Transverse colon (tissue), 4 donors: ENCODE measurements at regions of chr12 and their contacts with region 1.

Region 1: GRCh38 chr12:76920172-76921014 is 41.6 kb upstream of the CSRP2 start:
- DNase-seq: no peak
- H3K4me3 ChIP-seq: no peak overlapping the region
- H3K27ac ChIP-seq: no peak overlapping the region
- H3K4me1 ChIP-seq: no peaks in the 10 kb centered on the region
- H3K27me3 ChIP-seq: no peaks in the 10 kb centered on the region
- CTCF ChIP-seq: no peak
- EP300 ChIP-seq: no peak
- POLR2A ChIP-seq: no peak

Region 2: GRCh38 chr12:76820888-76821482 is 99.4 kb before region 1 on chr12:
- in situ Hi-C with region 1: loop called in 1 of 4 experiments (anchors 25 kb)
- intact Hi-C with region 1: no loop called
- DNase-seq: peak; percentile 19
- H3K4me3 ChIP-seq: no peak overlapping the region
- H3K27ac ChIP-seq: no peak overlapping the region
- H3K4me1 ChIP-seq: no peaks in the 10 kb centered on the region
- H3K27me3 ChIP-seq: no peaks in the 10 kb centered on the region
- CTCF ChIP-seq: peak; percentile 41 to 55 (median 47)
- EP300 ChIP-seq: no peak
- POLR2A ChIP-seq: no peak

Region 3: GRCh38 chr12:76859611-76860010 is 60.8 kb before region 1 on chr12:
- in situ Hi-C with region 1: no loop called
- intact Hi-C with region 1: no loop called
- DNase-seq: no peak
- H3K4me3 ChIP-seq: no peak overlapping the region
- H3K27ac ChIP-seq: peak overlapping the region in 2 of 4 donors; percentile 29 to 41
- H3K4me1 ChIP-seq: peaks cover 0 to 12% (median 0%) of the 10 kb centered on the region in 4 donors
- H3K27me3 ChIP-seq: no peaks in the 10 kb centered on the region
- CTCF ChIP-seq: no peak
- EP300 ChIP-seq: no peak
- POLR2A ChIP-seq: no peak

Region 4: GRCh38 chr12:77189458-77189857 is 269.1 kb after region 1 on chr12:
- in situ Hi-C with region 1: no loop called
- intact Hi-C with region 1: no loop called
- DNase-seq: no peak
- H3K4me3 ChIP-seq: no peak overlapping the region
- H3K27ac ChIP-seq: no peak overlapping the region
- H3K4me1 ChIP-seq: no peaks in the 10 kb centered on the region
- H3K27me3 ChIP-seq: no peaks in the 10 kb centered on the region
- CTCF ChIP-seq: no peak
- EP300 ChIP-seq: no peak
- POLR2A ChIP-seq: no peak